PC-9 (cell line): ENCODE measurements at regions of chr4 and their contacts with region 1.

Region 1: DNA sequence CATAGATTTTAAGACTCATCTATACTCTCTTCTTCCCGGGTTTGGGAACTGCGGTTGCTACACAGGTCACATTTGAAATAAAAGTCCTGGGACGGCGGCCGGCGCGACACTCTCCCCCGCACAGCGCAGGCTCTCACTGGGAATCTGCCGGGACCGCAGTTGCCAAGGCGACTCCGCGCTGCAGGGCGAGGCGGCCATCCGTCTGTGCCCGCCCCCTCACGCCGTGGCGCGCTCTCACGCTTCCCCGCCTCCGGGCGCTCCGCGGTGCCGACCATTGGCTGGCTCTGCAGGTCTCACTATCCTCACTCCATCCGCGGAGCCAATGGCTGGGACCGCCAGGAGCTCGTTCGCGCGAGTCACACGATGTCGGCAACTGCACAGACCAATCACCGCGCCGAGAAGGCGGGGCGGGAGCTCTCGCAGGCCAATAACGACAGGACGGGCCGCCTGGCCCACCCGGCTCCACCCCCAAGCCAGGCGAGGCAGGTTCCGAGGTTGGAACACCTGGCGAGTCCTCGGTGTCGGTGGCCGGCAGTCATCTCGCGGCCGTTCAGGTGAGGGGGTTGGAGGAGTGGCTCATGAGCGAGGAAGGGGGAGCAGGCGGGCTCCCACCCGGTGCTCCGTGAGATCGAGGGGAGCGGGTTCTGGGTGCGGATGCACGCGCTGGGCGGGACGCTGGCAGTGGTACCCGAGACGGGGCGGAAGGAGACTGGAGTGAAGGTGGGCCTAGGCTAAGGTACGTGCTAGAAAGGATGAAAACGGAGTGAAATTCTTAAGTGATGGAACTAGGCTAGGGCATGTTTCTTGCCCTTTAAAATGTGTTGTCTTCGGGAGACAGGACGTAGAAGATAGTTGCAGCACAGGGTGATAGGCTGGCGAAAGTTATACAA is at the start of gene MSMO1:
- DNase-seq: peak; percentile 94 to 99
- H3K4me3 ChIP-seq: peak within 1 kb of the TSS; percentile 98
- H3K27ac ChIP-seq: peak within 1 kb of the TSS; percentile 96
- H3K4me1 ChIP-seq: peaks cover 49% of the 10 kb centered on the region
- H3K27me3 ChIP-seq: no peaks in the 10 kb centered on the region
- CTCF ChIP-seq: no peak
- total RNA-seq, gene MSMO1: 111 and 117 TPM in 2 replicates

Region 2: GRCh38 chr4:163494360-163495162 is 1832.9 kb before region 1 on chr4 and contains the start of gene TMA16:
- CTCF ChIA-PET with region 1: no interaction called
- POLR2A ChIA-PET with region 1: no interaction called
- intact Hi-C with region 1: loop called (anchors 10 kb)
- DNase-seq: peak; percentile 77 to 83
- H3K4me3 ChIP-seq: peak within 1 kb of the TSS; percentile 76
- H3K27ac ChIP-seq: peak within 1 kb of the TSS; percentile 93
- H3K4me1 ChIP-seq: no peaks in the 10 kb centered on the region; the same call in 1 of the 2 replicates
- H3K27me3 ChIP-seq: no peaks in the 10 kb centered on the region
- CTCF ChIP-seq: no peak
- total RNA-seq, gene TMA16: 34.5 and 36.8 TPM in 2 replicates

Region 3: GRCh38 chr4:165112368-165113139 is 214.9 kb before region 1 on chr4 and contains the start of gene TMEM192:
- CTCF ChIA-PET with region 1: interaction called, 5 read pairs
- POLR2A ChIA-PET with region 1: interaction called, 3 read pairs
- intact Hi-C with region 1: loop called (anchors 1 kb)
- DNase-seq: peak; percentile 69 to 95
- H3K4me3 ChIP-seq: peak within 1 kb of the TSS; percentile 80
- H3K27ac ChIP-seq: peak within 1 kb of the TSS; percentile 65
- H3K4me1 ChIP-seq: 0 out of 2 replicates have a peak, but pooled peaks cover 3% of the 10 kb centered on the region
- H3K27me3 ChIP-seq: no peaks in the 10 kb centered on the region
- CTCF ChIP-seq: no peak
- total RNA-seq, gene TMEM192: 11.5 and 16.8 TPM in 2 replicates

Region 4: GRCh38 chr4:165207431-165208220 is 119.8 kb before region 1 on chr4 and contains the start of gene KLHL2:
- CTCF ChIA-PET with region 1: no interaction called
- POLR2A ChIA-PET with region 1: no interaction called
- intact Hi-C with region 1: loop called (anchors 2 kb)
- DNase-seq: peak in 1 of 2 experiments; percentile 75
- H3K4me3 ChIP-seq: peak within 1 kb of the TSS; percentile 78
- H3K27ac ChIP-seq: no peak within 1 kb of the TSS
- H3K4me1 ChIP-seq: peaks cover 69% of the 10 kb centered on the region
- H3K27me3 ChIP-seq: no peaks in the 10 kb centered on the region
- CTCF ChIP-seq: no peak
- total RNA-seq, gene KLHL2: 26.4 and 27.2 TPM in 2 replicates

Region 5: DNA sequence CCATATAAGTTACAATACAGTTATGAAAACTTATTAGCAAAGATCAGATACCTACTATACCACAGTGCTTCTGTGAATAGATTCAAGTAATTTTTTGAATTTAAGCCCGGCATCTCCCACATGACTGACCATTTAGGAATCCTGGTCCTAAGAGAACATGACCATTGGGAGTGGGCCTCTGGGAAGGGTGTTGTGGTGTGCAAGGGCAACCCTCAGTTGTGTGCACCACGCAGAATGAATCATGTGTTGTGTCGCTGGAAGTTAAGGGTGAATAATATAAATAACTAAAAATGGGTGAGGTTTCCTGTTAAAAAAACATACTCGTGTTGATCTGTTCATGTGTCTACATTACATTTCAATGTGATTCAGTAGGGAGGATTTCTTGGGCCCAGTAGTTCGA is 66.8 kb after region 1 on chr4:
- CTCF ChIA-PET with region 1: no interaction called
- POLR2A ChIA-PET with region 1: no interaction called
- intact Hi-C with region 1: no loop called
- DNase-seq: no peak
- H3K4me3 ChIP-seq: no peak overlapping the region
- H3K27ac ChIP-seq: no peak overlapping the region
- H3K4me1 ChIP-seq: no peaks in the 10 kb centered on the region
- H3K27me3 ChIP-seq: no peaks in the 10 kb centered on the region
- CTCF ChIP-seq: no peak

Region 6: GRCh38 chr4:165440415-165441189 is 113.1 kb after region 1 on chr4:
- CTCF ChIA-PET with region 1: no interaction called
- POLR2A ChIA-PET with region 1: no interaction called
- intact Hi-C with region 1: loop called (anchors 1 kb)
- DNase-seq: peak; percentile 67 to 87
- H3K4me3 ChIP-seq: no peak overlapping the region
- H3K27ac ChIP-seq: no peak overlapping the region
- H3K4me1 ChIP-seq: peaks cover 26% of the 10 kb centered on the region
- H3K27me3 ChIP-seq: peaks cover 3% of the 10 kb centered on the region; the same call in 1 of the 2 replicates
- CTCF ChIP-seq: no peak

Region 7: DNA sequence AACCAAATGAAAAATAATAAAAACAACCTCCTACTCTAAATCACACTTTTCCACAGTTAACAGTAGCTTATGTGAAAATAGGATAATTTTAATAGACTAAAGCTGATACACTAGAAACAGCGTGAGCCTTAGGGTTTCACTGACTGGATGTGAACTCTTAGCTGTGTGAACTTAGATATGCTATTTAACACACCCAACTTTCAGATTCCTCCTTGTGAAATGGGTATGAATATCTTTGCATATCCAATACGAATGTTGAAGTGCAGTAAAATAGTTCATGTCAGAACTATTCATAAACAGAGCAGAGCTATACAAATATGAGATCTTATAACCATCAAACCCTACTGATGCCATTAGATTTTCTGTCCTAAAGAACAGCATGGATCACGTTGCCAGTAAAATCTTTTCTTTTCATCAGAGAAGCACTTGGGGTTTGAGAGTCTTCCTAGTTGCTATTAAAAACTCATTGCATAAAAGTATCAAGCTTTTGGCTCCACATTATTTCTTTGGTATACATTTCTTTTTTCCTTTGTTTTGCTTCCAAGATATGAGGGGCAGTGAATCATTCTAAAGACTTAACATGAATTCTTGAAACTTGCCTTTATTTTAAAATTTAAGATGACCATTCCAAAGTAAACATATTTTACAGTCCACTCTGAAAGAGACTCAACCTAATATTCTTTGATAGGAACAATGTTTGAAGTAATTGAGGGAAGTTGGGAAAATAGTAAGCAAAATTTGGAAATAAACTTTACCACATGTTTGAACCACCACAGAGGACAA is 153.8 kb after region 1 on chr4:
- CTCF ChIA-PET with region 1: no interaction called
- POLR2A ChIA-PET with region 1: no interaction called
- intact Hi-C with region 1: no loop called
- DNase-seq: no peak
- H3K4me3 ChIP-seq: no peak overlapping the region
- H3K27ac ChIP-seq: no peak overlapping the region
- H3K4me1 ChIP-seq: peaks cover 12% of the 10 kb centered on the region
- H3K27me3 ChIP-seq: no peaks in the 10 kb centered on the region
- CTCF ChIP-seq: no peak

Region 8: DNA sequence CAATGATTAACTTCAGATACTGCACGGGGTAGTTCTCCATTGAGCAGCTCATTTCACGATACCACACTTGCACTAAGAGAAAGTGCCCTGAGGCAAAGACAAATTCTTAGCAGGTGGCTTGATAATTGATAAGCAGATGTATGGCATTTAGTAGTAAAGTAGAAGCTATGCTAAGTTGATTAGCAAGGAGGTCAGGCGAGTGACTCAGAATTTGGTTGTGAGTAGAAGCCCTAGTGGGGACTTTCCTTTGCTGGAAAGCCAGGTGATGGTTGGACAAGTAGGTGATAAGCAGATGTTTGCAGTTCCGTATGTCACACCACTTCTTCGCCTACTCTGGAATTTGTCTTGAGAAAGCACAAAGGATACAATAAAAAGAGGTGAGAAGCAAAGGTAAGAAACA is 604.3 kb after region 1 on chr4:
- CTCF ChIA-PET with region 1: no interaction called
- POLR2A ChIA-PET with region 1: no interaction called
- intact Hi-C with region 1: no loop called
- DNase-seq: no peak
- H3K4me3 ChIP-seq: no peak overlapping the region
- H3K27ac ChIP-seq: no peak overlapping the region
- H3K4me1 ChIP-seq: no peaks in the 10 kb centered on the region
- H3K27me3 ChIP-seq: no peaks in the 10 kb centered on the region
- CTCF ChIP-seq: no peak